Activated naive CD4-positive, alpha-beta T cell treated with anti-CD3 and anti-CD28 coated beads, Interleukin-2, amount 10 ng/mL, durations not matched to agents 7 days and 5 days (primary cell): ENCODE measurements at regions of chr6 and their contacts with region 1.

Region 1: GRCh38 chr6:97059473-97059872 is 134.9 kb downstream of the KLHL32 start:
- DNase-seq: no peak
- H3K4me3 Mint-ChIP-seq: no peak overlapping the region
- H3K27ac Mint-ChIP-seq: no peak overlapping the region
- H3K4me1 Mint-ChIP-seq: no peaks in the 10 kb centered on the region
- H3K27me3 Mint-ChIP-seq: no peaks in the 10 kb centered on the region

Region 2: DNA sequence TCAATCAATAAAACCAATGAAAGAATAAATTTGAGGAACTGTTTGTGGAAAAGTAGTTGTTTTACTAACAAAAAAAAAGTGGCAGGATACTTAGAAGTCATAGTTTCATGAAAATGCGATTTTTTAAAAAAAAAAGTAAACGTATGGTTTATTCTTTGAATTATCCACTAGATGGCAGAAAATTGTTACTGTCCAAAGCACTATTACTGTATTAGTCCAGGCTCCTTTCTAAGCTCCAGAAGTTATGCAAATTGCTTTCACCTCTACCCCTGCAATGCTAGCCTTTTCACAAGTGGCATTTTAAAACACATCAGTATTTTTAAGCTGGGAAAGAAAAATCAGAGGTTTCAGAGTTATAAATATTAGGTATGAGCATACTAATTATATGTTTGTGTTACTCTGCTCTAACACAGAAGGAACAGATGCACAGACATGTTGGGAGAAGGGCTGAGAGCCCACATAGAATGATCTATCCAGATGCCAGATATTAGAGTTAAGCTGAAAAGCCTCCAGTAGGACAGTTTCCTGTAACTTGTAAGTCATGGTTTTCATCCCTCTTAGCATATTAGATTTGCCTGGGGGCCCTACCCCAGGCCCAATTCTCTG is 432.6 kb before region 1 on chr6:
- CTCF ChIA-PET with region 1: interaction called, 17 read pairs
- DNase-seq: no peak
- H3K4me3 Mint-ChIP-seq: no peak overlapping the region
- H3K27ac Mint-ChIP-seq: no peak overlapping the region
- H3K4me1 Mint-ChIP-seq: no peaks in the 10 kb centered on the region
- H3K27me3 Mint-ChIP-seq: no peaks in the 10 kb centered on the region

Region 3: DNA sequence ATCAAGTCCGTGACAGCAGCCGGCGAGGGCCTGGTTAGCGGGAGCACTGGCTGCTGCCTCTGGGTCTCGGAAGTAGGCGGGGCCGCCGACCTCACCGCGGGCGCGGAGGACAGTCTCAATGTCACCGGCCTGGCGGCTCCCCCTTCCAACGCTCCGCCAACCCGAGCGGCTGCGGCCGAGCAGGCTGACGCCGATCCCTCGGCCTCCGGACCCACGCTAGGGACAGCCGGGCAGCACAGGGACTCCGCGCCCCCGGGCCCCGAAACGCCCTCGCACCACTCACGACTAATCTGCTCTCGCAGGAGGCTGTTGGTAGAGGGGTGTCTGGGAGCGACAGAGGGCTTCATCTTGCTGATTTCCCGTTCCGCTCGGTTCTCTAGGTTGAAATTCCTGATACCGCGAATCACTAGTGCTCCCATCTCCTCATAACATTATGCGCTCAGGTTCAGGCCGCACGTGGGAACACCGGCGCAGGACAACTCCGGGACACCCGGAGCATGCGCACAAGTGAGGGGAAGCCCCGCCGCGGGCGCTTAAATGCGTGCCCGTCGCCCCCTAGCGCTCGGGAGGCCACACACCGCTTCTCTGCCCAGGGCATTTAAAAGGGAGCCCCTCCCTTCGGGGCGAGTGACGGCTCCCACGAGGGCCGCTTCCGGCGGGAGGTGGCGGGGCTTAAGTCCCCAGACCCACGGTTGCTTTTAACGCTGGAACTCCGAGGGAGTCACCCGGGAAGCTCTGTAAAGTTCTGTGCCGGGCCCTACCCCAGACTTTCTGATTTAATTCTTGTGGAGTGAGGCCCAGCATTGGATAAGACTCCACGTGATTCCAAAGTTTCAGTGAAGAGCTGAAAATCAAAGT is 161.9 kb before region 1 on chr6 and contains the start of gene NDUFAF4:
- CTCF ChIA-PET with region 1: interaction called, 36 read pairs
- DNase-seq: peak; percentile 96
- H3K4me3 Mint-ChIP-seq: peak within 1 kb of the TSS; percentile 92
- H3K27ac Mint-ChIP-seq: peak within 1 kb of the TSS; percentile 88
- H3K4me1 Mint-ChIP-seq: peaks cover 33% of the 10 kb centered on the region
- H3K27me3 Mint-ChIP-seq: peaks cover 3% of the 10 kb centered on the region

Region 4: DNA sequence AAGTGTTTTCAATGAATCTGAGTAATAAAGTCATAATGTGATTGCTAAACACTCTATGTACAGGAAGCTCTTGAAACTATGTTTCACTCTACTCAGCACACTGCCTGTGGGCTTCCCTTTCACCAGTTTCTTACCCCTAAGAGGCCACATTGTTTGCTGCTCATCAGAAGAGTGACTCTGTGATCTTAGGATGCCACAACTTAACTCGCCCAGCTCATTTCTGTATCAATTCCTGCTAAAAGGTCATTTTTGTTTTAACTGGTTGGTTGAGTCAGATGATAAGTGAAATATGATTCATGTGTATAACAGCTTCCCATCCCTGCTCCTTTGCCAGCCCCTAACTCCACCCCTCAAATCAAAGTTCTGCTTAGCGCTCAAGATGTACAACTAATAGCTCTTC is 152.0 kb before region 1 on chr6:
- CTCF ChIA-PET with region 1: interaction called, 16 read pairs
- DNase-seq: no peak
- H3K4me3 Mint-ChIP-seq: no peak overlapping the region
- H3K27ac Mint-ChIP-seq: no peak overlapping the region
- H3K4me1 Mint-ChIP-seq: peaks cover 6% of the 10 kb centered on the region
- H3K27me3 Mint-ChIP-seq: peaks cover 25% of the 10 kb centered on the region